Activated CD8-positive, alpha-beta T cell treated with anti-CD3 and anti-CD28 coated beads for 36 hours (primary cell): ENCODE measurements at regions of chr5 and their contacts with region 1.

Region 1: GRCh38 chr5:169577951-169578350 is 5.6 kb upstream of the SPDL1 start:
- DNase-seq: no peak
- ATAC-seq: no peak
- H3K4me3 Mint-ChIP-seq: no peak overlapping the region
- H3K27ac Mint-ChIP-seq: no peak overlapping the region
- H3K4me1 Mint-ChIP-seq: peaks cover 14% of the 10 kb centered on the region
- H3K27me3 Mint-ChIP-seq: peaks cover 12% of the 10 kb centered on the region
- CTCF ChIP-seq: no peak

Region 2: DNA sequence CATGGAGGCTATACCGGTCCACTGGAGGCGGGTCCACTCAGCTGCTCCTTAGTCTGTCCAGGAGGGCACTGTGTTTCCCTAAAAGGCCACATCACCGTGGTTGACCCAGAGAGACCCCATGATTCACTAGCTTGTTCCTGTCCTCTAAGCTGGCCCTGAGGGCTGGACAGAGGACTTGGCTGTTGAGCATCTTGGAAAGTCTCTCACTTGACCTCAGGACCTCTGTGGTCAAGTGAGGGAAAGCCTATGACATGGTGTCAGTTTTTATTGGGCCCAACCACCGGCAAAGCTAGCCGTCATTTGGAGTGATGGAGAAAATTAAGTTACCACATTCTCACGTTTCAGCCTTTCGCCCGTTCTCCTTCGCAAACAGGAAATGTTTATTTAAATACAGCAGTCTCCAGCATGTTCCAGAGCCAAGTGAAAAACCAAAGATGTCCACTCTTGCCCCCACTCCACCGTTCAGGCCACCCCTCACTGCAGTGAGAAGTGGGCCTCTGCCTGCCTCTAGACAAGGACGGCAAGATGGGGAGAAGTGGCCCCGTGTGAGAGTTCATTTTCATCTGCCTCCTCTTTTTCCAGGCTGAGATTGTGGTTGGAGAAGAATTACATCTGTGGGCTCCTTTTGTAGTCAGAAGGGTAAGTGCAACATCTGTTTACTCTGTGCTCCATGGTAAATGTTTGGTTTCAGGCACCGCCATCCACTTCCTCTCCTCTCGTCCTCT is 281.4 kb before region 1 on chr5:
- CTCF ChIA-PET with region 1: no interaction called
- POLR2A ChIA-PET with region 1: no interaction called
- intact Hi-C with region 1: loop called (anchors 10 kb)
- DNase-seq: no peak
- ATAC-seq: no peak
- H3K4me3 Mint-ChIP-seq: no peak overlapping the region
- H3K27ac Mint-ChIP-seq: no peak overlapping the region
- H3K4me1 Mint-ChIP-seq: peaks cover 3% of the 10 kb centered on the region
- H3K27me3 Mint-ChIP-seq: peaks cover 22% of the 10 kb centered on the region
- CTCF ChIP-seq: no peak

Region 3: GRCh38 chr5:169474226-169474625 is 103.7 kb before region 1 on chr5:
- CTCF ChIA-PET with region 1: no interaction called
- POLR2A ChIA-PET with region 1: no interaction called
- intact Hi-C with region 1: no loop called
- DNase-seq: no peak
- ATAC-seq: no peak
- H3K4me3 Mint-ChIP-seq: no peak overlapping the region
- H3K27ac Mint-ChIP-seq: no peak overlapping the region
- H3K4me1 Mint-ChIP-seq: no peaks in the 10 kb centered on the region
- H3K27me3 Mint-ChIP-seq: peaks cover 3% of the 10 kb centered on the region
- CTCF ChIP-seq: no peak

Region 4: DNA sequence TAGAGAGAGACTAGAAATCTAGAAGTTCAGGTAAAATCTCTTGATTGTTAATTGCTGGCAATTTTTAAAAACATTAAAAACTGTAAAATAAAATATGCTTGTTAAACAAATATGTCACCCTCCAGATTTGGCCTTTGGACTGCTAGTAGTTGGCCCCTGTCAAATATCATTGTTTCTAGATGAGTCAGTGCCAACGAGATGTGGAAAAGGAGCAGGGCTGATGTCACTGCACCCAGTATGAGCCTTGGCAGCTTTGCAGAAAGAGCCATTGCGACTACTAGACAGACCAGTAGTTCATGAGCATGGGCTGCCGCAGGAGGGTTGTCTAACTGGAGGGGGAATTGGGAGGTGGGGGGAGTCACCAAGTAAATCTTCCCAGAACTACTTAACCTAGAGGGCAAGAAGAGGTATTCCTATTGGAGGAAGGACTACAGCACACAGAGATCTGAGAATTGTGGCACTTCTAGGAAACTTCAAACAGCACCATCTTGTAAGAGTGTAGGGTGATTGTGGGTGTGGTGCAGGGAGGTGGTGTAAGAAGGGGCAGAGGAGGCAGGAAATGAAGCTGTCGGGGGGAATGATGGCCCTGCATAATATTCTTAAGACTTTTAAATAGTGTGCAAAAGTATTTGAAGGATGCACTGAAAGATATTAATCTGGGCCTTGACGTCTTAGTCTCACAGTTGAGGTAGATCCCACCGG is 52.0 kb after region 1 on chr5:
- CTCF ChIA-PET with region 1: no interaction called
- POLR2A ChIA-PET with region 1: no interaction called
- intact Hi-C with region 1: no loop called
- DNase-seq: peak; percentile 49
- ATAC-seq: peak; percentile 94
- H3K4me3 Mint-ChIP-seq: no peak overlapping the region
- H3K27ac Mint-ChIP-seq: peak overlapping the region; percentile 58
- H3K4me1 Mint-ChIP-seq: peaks cover 6% of the 10 kb centered on the region
- H3K27me3 Mint-ChIP-seq: peaks cover 2% of the 10 kb centered on the region
- CTCF ChIP-seq: no peak

Region 5: GRCh38 chr5:169663537-169663936 is 85.6 kb after region 1 on chr5:
- CTCF ChIA-PET with region 1: no interaction called
- POLR2A ChIA-PET with region 1: no interaction called
- intact Hi-C with region 1: no loop called
- DNase-seq: no peak
- ATAC-seq: no peak
- H3K4me3 Mint-ChIP-seq: no peak overlapping the region
- H3K27ac Mint-ChIP-seq: no peak overlapping the region
- H3K4me1 Mint-ChIP-seq: peaks cover 35% of the 10 kb centered on the region
- H3K27me3 Mint-ChIP-seq: no peaks in the 10 kb centered on the region
- CTCF ChIP-seq: no peak